PC-3 (cell line): ENCODE measurements at regions of chr17 and their contacts with region 1.

Region 1: DNA sequence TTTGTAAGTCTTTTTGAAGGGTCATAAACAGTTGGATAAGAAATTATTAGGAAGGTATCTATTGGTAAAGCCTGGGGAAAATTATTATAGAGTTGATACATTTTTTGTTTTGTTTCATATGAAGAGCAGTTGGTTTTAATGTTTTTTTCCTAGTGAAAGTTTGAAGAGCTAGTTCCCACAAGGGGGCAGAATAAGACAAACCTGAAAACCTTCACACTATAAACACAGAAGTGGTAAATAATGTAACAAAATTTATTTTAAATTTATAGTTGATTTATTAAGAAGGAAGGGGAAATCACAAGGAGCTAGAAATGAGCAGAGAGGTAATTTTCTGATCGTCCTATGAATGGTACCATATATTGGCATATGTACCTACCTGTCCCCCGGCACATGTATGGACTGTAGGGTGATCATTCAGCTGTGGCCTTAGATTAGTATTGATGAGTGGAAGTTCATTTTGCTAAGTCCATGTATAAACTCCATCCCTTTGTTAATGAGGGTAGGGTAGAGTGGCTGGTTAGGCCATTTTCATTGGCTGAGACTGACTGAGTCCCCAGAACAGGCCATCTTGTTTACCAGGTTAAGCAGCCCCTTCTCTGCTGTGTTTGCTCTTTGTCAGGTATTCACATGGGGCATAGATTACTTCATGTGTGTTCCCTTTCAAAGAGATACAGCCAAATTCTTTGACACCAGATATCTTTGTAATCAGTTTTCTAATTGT is 116.4 kb downstream of the TANC2 start:
- DNase-seq: peak; percentile 58
- ATAC-seq: peak; percentile 28; the same call in 1 of the 2 replicates
- H3K4me3 ChIP-seq: no peak overlapping the region
- H3K27ac ChIP-seq: no peak overlapping the region
- H3K4me1 ChIP-seq: peaks cover 4% of the 10 kb centered on the region; the same call in 1 of the 2 replicates
- H3K27me3 ChIP-seq: no peaks in the 10 kb centered on the region
- CTCF ChIP-seq: peak; percentile 77

Region 2: DNA sequence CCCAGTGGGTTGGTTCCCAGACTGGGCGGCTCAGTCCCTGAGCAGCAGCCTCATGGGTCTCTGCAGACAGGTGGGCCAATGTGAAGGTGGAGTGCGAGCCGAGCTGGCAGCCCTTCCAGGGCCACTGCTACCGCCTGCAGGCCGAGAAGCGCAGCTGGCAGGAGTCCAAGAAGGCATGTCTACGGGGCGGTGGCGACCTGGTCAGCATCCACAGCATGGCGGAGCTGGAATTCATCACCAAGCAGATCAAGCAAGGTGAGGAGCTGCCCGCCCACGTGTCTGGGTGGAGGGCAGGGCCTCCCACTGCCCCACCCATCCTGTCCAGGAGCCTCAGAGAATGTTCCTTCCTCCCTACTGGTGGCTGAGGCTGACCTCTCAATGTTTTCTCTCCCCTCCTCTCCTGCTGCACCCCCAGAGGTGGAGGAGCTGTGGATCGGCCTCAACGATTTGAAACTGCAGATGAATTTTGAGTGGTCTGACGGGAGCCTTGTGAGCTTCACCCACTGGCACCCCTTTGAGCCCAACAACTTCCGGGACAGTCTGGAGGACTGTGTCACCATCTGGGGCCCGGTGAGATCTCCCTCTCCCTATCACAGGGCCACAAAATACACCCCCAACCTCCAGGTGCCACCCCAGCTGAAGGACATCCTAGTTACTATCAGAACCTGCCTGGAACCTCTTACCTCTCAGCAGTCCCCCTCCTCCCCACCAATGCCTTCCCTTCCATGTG is 410.7 kb before region 1 on chr17:
- CTCF ChIA-PET with region 1: no interaction called
- POLR2A ChIA-PET with region 1: no interaction called
- intact Hi-C with region 1: loop called (anchors 10 kb)
- DNase-seq: no peak
- ATAC-seq: peak; percentile 29
- H3K4me3 ChIP-seq: no peak overlapping the region
- H3K27ac ChIP-seq: no peak overlapping the region
- H3K4me1 ChIP-seq: peaks cover 6% of the 10 kb centered on the region
- H3K27me3 ChIP-seq: no peaks in the 10 kb centered on the region
- CTCF ChIP-seq: no peak

Region 3: GRCh38 chr17:62995377-62995885 is 87.0 kb before region 1 on chr17:
- CTCF ChIA-PET with region 1: interaction called, 11 read pairs
- POLR2A ChIA-PET with region 1: no interaction called
- intact Hi-C with region 1: loop called (anchors 2 kb)
- DNase-seq: peak; percentile 65
- ATAC-seq: peak; percentile 88
- H3K4me3 ChIP-seq: no peak overlapping the region
- H3K27ac ChIP-seq: no peak overlapping the region
- H3K4me1 ChIP-seq: no peaks in the 10 kb centered on the region
- H3K27me3 ChIP-seq: no peaks in the 10 kb centered on the region
- CTCF ChIP-seq: peak; percentile 92